ENCODE measurements at regions of chr6 and their contacts with region 1.

Region 1: GRCh38 chr6:17012421-17013225 is 89.2 kb upstream of the STMND1 start:
- DNase-seq: peak; percentile 4 to 41
- H3K4me3 ChIP-seq: no peak overlapping the region
- H3K4me3 Mint-ChIP-seq: no peak overlapping the region
- H3K27ac Mint-ChIP-seq: no peak overlapping the region
- H3K4me1 ChIP-seq: no peaks in the 10 kb centered on the region
- H3K4me1 Mint-ChIP-seq: no peaks in the 10 kb centered on the region
- H3K27me3 ChIP-seq: no peaks in the 10 kb centered on the region
- H3K27me3 Mint-ChIP-seq: peaks cover 3% of the 10 kb centered on the region
- CTCF ChIP-seq: peak in 1 of 2 experiments; percentile 14

Region 2: DNA sequence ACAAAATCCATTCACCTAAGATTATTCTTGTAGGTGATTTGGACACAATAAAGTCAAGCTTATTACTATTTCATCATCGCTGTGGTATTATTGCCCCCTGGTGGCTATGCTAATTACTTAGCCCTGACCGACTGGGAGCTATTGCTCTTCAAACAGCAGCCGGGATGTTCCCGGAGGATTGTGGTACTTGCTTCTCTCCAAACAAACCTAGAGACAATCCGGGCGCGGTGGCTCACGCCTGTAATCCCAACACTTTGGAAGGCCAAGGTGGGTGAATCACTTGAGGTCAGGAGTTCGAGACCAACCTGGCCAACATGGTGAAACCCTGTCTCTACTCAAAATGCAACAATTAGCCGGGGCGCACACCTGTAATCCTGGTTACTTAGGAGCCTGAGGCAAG is 73.8 kb after region 1 on chr6:
- CTCF ChIA-PET with region 1: interaction called, 5 read pairs
- POLR2A ChIA-PET with region 1: no interaction called
- intact Hi-C with region 1: loop called (anchors 1 kb)
- DNase-seq: peak; percentile 51 to 62
- H3K4me3 ChIP-seq: no peak overlapping the region
- H3K4me3 Mint-ChIP-seq: no peak overlapping the region
- H3K27ac Mint-ChIP-seq: no peak overlapping the region
- H3K4me1 ChIP-seq: no peaks in the 10 kb centered on the region
- H3K4me1 Mint-ChIP-seq: no peaks in the 10 kb centered on the region
- H3K27me3 ChIP-seq: no peaks in the 10 kb centered on the region
- H3K27me3 Mint-ChIP-seq: peaks cover 4% of the 10 kb centered on the region
- CTCF ChIP-seq: peak; percentile 50 to 53

Measured in Caco-2 (cell line).